HEK293T (cell line): ENCODE measurements at regions of chr2 and their contacts with region 1.

Region 1: DNA sequence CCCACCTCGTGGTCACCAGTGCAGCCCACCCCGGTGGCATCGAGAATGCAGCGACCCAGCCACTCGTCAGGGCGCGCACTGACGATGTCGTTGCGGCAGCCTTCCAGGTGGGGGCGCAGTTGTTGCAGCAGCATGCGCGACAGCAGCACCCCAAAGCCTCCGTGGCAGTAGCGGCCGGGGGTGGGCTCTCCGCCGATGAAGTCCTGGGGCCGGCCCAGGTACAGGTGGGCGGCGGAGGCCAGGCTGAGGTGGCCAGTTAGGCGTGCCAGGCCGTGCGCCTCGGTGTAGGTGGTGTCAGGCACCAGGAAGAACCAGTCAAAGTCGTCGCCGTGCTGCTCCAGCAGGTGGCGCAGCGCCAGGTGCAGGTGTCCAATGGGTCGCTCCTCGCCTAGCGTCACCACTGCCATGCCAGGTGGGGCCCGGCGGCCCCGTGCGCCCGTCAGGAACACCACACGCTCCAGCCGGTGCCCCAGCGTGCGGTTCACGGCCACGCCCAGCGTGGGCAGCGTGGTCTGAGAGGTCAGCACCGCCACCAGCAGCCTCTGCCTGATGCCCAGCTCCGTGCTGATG is 1.9 kb downstream of the CHPF start:
- DNase-seq: peak; percentile 79

Region 2: GRCh38 chr2:219560037-219560892 is 18.6 kb after region 1 on chr2:
- CTCF ChIA-PET with region 1: interaction called, 23 read pairs
- POLR2A ChIA-PET with region 1: interaction called, 3 read pairs
- DNase-seq: peak; percentile 52

Region 3: DNA sequence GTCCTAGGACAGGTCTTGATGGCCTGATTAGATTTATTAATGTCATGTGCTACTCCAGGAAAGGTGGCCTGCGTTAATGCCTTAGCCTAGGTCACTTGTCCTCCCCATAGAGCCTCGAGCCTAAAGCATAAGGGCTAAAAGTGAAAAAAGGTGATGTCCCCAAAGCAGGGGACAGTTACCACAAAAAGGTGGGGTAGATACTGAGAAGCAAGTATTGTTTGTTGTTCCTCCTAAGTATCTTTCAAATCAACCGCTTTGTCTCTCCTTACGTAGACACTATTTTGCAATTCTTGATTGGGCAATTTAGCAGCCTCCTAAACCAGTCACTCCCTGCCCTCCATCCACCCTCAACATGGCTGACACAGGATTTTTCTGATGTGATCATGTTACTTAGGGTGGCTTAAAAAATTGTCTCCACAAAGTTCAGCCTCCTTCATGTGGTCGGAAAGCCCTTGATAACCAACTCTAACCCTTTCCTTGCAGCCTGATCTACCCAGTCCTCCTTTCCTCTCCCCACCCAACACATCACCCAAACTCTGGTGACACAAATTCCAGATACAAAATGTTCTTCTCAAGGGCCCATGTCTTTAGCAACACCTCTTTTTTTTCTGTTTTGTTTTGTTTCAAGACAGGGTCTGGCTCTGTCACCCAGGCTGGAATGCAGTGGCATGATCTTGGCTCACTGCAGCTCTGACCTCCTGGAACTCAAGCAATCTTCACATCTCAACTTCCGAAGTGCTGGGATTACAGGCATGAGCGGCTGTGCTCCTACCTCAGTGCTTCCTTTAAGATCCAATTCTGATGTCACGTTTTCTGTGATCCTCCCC is 37.3 kb after region 1 on chr2:
- CTCF ChIA-PET with region 1: no interaction called
- POLR2A ChIA-PET with region 1: no interaction called
- DNase-seq: no peak

Region 4: GRCh38 chr2:219597552-219598307 is 56.0 kb after region 1 on chr2 and contains the start of gene STK11IP:
- CTCF ChIA-PET with region 1: interaction called, 11 read pairs
- POLR2A ChIA-PET with region 1: interaction called, 9 read pairs
- DNase-seq: peak; percentile 96

Region 5: DNA sequence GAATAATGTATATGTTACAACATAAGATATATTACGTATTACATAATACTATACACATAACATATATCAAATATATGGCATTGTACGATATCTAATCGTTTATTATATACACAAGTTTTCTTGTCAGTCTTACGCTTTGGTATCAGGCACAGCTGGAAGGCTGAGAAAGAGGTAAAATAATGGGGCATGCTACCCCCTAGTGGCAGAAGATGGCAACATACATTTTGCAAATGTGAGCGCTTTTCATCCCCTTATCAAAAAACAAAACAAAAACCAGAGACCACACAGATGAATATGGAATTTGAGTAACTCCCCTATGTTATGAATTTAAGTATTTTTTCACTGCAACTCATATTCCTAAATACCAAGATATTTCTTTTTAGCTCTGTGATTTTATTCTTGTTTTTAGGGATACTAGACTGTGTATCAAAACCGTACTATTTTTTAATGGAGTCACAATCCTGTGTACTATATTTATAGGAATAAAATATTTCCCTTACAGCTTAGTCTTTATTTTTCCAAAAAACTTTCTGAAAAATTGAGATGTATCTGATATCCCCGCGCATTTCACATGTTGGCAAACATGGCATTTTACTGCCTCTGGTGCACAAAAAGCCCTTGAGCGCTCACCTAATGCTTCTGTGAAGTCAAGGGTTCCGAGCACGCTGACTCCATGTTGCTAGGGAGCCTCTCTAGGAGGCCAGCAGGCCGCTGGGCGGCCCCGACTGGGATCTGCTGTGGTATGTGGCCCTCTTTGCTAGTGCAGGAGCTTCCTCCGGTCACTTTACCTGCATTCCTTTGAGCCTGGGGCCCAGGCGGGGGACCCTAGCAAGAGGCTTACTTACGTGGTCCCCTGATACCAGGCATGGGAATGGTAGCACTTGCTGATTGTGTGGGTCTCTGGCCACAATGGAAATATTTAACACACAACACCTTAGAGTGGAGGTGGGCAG is 148.3 kb after region 1 on chr2:
- CTCF ChIA-PET with region 1: interaction called, 13 read pairs
- POLR2A ChIA-PET with region 1: no interaction called
- DNase-seq: peak; percentile 66